ENCODE measurements at regions of chr7 and their contacts with region 1.

Region 1: DNA sequence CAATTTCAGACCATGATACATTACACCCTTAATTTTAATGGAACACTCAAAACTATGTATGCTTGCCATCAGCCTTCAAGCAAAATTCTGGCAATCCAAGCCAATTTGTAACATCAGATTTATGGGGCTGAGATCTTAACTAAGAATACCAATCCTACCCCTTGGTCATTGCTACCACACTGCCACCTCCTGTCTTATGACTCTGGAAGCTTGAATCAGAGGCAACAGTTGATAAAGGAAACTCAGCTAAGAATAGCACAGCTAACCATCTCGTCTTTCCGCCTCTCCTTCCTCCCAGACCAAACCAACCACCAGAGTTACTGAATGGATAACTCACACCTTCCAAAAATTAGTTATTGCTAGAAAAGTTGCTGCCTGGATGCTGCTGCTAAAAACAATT is 7.4 kb downstream of the IGF2BP3 start:
- DNase-seq: no peak
- H3K4me3 ChIP-seq: no peak overlapping the region
- H3K27ac ChIP-seq: no peak overlapping the region
- H3K4me1 ChIP-seq: peaks cover 0 to under 1% of the 10 kb centered on the region in 2 donors
- H3K27me3 ChIP-seq: peaks cover 1% of the 10 kb centered on the region
- CTCF ChIP-seq: no peak

Region 2: GRCh38 chr7:23277359-23277989 is 185.4 kb before region 1 on chr7:
- intact Hi-C with region 1: loop called (anchors 5 kb)
- DNase-seq: no peak
- H3K4me3 ChIP-seq: no peak overlapping the region
- H3K27ac ChIP-seq: no peak overlapping the region
- H3K4me1 ChIP-seq: no peaks in the 10 kb centered on the region
- H3K27me3 ChIP-seq: no peaks in the 10 kb centered on the region
- CTCF ChIP-seq: peak; percentile 33 to 65 (median 52)

Region 3: DNA sequence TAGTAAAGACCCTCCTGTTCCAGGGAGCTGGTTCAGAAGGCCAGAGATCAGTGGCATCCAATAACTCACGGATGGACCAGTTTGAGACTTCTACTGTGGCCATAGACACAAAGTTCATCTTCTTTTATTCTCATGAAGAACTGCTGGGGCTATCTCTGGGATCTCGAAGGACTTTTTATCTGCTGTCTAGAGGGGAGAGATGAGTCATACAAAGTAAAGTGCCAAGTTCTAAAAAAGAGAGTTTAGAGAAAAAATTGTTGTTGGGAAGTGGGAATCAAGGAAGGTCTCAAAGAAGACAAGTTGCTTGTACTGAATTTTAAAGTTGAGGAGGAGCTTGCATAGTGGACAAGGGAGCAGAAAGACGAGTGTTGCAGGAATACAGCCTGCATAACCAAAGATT is 209.2 kb after region 1 on chr7:
- intact Hi-C with region 1: no loop called
- DNase-seq: no peak
- H3K4me3 ChIP-seq: no peak overlapping the region
- H3K27ac ChIP-seq: no peak overlapping the region
- H3K4me1 ChIP-seq: no peaks in the 10 kb centered on the region
- H3K27me3 ChIP-seq: no peaks in the 10 kb centered on the region
- CTCF ChIP-seq: no peak

Measured in ascending aorta (tissue), 2 donors.